Common myeloid progenitor, CD34-positive (primary cell): ENCODE measurements at regions of chr1 and their contacts with region 1.

Region 1: GRCh38 chr1:225474986-225475820 is 47.4 kb upstream of the LBR start:
- DNase-seq: peak; percentile 57 to 69 (median 65)
- H3K4me3 ChIP-seq: peak overlapping the region in 3 of 7 experiments; percentile 5 to 49 (median 48)
- H3K27ac ChIP-seq: no peak overlapping the region
- H3K4me1 ChIP-seq: peaks cover 0 to 15% (median 10%) of the 10 kb centered on the region in 4 experiments
- H3K27me3 ChIP-seq: no peaks in the 10 kb centered on the region

Region 2: DNA sequence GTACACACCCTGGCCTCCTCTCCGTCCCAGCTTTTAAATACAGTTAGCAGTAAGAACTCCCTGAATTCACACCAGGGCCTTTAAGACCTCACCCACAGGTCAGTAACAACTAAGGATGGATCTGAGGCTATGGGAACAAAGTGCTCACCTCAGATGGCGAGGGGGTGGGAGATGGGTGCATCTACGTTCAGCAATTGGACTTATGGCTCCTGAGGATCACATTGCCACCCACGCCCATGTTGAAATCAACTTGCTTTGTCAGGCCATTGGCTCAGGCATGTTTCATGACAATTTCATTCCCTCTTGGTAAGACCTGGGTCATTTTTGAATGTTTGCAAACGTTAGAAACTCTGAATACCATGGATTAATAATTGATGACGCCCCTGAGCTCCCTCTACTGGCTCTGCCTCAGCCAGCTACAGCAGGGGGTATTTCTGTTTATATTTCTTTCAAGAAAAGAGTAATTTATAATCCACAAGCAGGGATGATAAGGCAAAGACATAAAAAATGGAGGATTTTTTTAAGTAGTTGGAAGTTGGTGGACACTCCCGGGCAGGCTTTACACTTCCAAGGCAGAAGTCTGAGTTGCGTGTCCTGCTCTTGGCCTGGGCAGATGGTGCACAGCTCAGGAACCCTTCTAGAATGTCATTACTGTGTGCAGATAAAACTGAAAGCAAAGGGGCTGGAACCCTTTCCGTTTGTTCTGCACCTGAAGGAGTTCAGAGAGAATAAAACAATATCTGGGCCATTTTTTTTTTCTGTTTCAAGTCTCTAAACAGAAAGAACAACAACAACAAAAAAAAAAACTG is 33.7 kb before region 1 on chr1:
- CTCF ChIA-PET with region 1: interaction called, 136 read pairs
- POLR2A ChIA-PET with region 1: no interaction called
- DNase-seq: peak in 1 of 3 donors; percentile 33
- H3K4me3 ChIP-seq: peak overlapping the region in 2 of 7 experiments; percentile 12 to 48
- H3K27ac ChIP-seq: peak overlapping the region in 1 of 2 experiments; percentile 19
- H3K4me1 ChIP-seq: peaks cover 20 to 56% (median 44%) of the 10 kb centered on the region in 4 experiments
- H3K27me3 ChIP-seq: no peaks in the 10 kb centered on the region

Region 3: DNA sequence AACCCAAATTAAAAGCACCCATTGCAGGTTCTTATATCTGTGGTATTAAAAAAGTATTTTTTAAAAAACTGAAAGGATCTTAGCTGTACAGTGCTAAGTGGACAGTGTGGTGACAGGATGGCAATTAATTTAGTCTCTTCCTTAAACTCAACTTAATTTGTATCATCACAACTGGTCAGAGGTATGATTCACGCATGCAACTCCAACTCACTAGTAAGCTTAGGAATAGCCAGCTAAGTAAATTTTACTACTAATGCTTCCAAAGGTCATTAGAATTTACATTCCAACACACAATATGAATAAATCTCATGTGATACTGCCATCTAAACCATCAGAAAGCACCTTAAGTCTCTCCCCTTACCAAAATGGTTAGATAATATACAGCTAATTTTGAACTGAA is 142.3 kb after region 1 on chr1:
- CTCF ChIA-PET with region 1: no interaction called
- POLR2A ChIA-PET with region 1: no interaction called
- DNase-seq: no peak
- H3K4me3 ChIP-seq: no peak overlapping the region
- H3K27ac ChIP-seq: no peak overlapping the region
- H3K4me1 ChIP-seq: no peaks in the 10 kb centered on the region
- H3K27me3 ChIP-seq: no peaks in the 10 kb centered on the region

Region 4: GRCh38 chr1:225766967-225767633 is 291.9 kb after region 1 on chr1:
- CTCF ChIA-PET with region 1: interaction called, 43 read pairs
- POLR2A ChIA-PET with region 1: no interaction called
- DNase-seq: no peak
- H3K4me3 ChIP-seq: no peak overlapping the region
- H3K27ac ChIP-seq: no peak overlapping the region
- H3K4me1 ChIP-seq: peaks cover 0 to 4% (median 1%) of the 10 kb centered on the region in 4 experiments
- H3K27me3 ChIP-seq: no peaks in the 10 kb centered on the region

Region 5: GRCh38 chr1:225772323-225772768 is 297.1 kb after region 1 on chr1:
- CTCF ChIA-PET with region 1: interaction called, 43 read pairs
- POLR2A ChIA-PET with region 1: no interaction called
- DNase-seq: peak; percentile 73 to 79 (median 73)
- H3K4me3 ChIP-seq: no peak overlapping the region
- H3K27ac ChIP-seq: no peak overlapping the region
- H3K4me1 ChIP-seq: peaks cover 4 to 17% (median 9%) of the 10 kb centered on the region in 4 experiments
- H3K27me3 ChIP-seq: no peaks in the 10 kb centered on the region